ENCODE measurements at regions of chr11 and their contacts with region 1.

Region 1: GRCh38 chr11:75896843-75897419 is 81.9 kb downstream of the UVRAG start:
- DNase-seq: peak; percentile 7
- H3K4me3 ChIP-seq: no peak overlapping the region
- H3K27ac ChIP-seq: no peak overlapping the region
- H3K27me3 ChIP-seq: no peaks in the 10 kb centered on the region
- CTCF ChIP-seq: peak; percentile 67

Region 2: DNA sequence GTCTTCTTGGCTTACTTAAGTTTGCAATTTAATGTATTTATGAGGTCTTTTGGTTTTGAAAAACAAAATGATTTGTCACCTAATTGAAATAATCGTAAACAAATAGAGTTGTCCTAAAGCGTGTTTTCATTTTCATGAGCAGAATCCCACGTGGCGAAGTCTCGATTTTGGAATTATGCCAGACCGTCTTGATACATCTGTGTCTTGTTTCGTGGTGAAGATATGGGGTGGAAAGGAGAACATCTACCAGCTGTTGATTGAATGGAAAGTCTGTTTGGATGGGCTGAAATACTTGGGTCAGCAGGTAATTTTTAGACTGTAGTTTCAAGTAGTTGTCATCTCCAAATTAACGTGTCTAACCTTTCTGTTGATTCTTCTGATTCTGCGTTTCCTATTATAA is 17.2 kb before region 1 on chr11:
- CTCF ChIA-PET with region 1: interaction called, 10 read pairs
- POLR2A ChIA-PET with region 1: interaction called, 4 read pairs
- DNase-seq: no peak
- H3K4me3 ChIP-seq: no peak overlapping the region
- H3K27ac ChIP-seq: no peak overlapping the region
- H3K27me3 ChIP-seq: no peaks in the 10 kb centered on the region
- CTCF ChIP-seq: no peak